ENCODE measurements at regions of chr16 and their contacts with region 1.

Region 1: GRCh38 chr16:15650019-15650697 is at the start of gene NDE1:
- DNase-seq: peak; percentile 91
- ATAC-seq: peak; percentile 96
- H3K4me3 ChIP-seq: peak within 1 kb of the TSS; percentile 76 to 97 (median 85)
- H3K4me3 Mint-ChIP-seq: peak within 1 kb of the TSS; percentile 98
- H3K27ac ChIP-seq: peak within 1 kb of the TSS; percentile 86 to 88
- H3K27ac Mint-ChIP-seq: peak within 1 kb of the TSS; percentile 93
- H3K4me1 ChIP-seq: peaks cover 21 to 36% of the 10 kb centered on the region in 2 donors
- H3K4me1 Mint-ChIP-seq: peaks cover 37% of the 10 kb centered on the region
- H3K27me3 ChIP-seq: no peaks in the 10 kb centered on the region
- H3K27me3 Mint-ChIP-seq: no peaks in the 10 kb centered on the region
- CTCF ChIP-seq: no peak
- total RNA-seq, gene NDE1: 144 and 149 TPM in 2 replicates

Region 2: GRCh38 chr16:15583505-15583904 is 66.7 kb before region 1 on chr16:
- CTCF ChIA-PET with region 1: no interaction called
- POLR2A ChIA-PET with region 1: no interaction called
- intact Hi-C with region 1: no loop called
- DNase-seq: no peak
- ATAC-seq: no peak
- H3K4me3 ChIP-seq: no peak overlapping the region
- H3K4me3 Mint-ChIP-seq: no peak overlapping the region
- H3K27ac ChIP-seq: no peak overlapping the region
- H3K27ac Mint-ChIP-seq: no peak overlapping the region
- H3K4me1 ChIP-seq: no peaks in the 10 kb centered on the region
- H3K4me1 Mint-ChIP-seq: peaks cover 1% of the 10 kb centered on the region
- H3K27me3 ChIP-seq: no peaks in the 10 kb centered on the region
- H3K27me3 Mint-ChIP-seq: no peaks in the 10 kb centered on the region
- CTCF ChIP-seq: no peak

Region 3: GRCh38 chr16:15672514-15673167 is 22.5 kb after region 1 on chr16:
- CTCF ChIA-PET with region 1: interaction called, 4 read pairs
- POLR2A ChIA-PET with region 1: no interaction called
- intact Hi-C with region 1: loop called (anchors 2 kb)
- DNase-seq: peak; percentile 74
- ATAC-seq: peak; percentile 90
- H3K4me3 ChIP-seq: peak overlapping the region in 2 of 5 experiments; percentile 1 to 6
- H3K4me3 Mint-ChIP-seq: peak overlapping the region; percentile 59
- H3K27ac ChIP-seq: peak overlapping the region; percentile 87 to 95
- H3K27ac Mint-ChIP-seq: peak overlapping the region; percentile 92
- H3K4me1 ChIP-seq: peaks cover 19 to 20% of the 10 kb centered on the region in 2 donors
- H3K4me1 Mint-ChIP-seq: peaks cover 38% of the 10 kb centered on the region
- H3K27me3 ChIP-seq: no peaks in the 10 kb centered on the region
- H3K27me3 Mint-ChIP-seq: no peaks in the 10 kb centered on the region
- CTCF ChIP-seq: no peak

Measured in B cell (primary cell).